OCI-LY7 (cell line): ENCODE measurements at regions of chr12 and their contacts with region 1.

Region 1: GRCh38 chr12:113048716-113049127 is 7.8 kb upstream of the DTX1 start:
- DNase-seq: peak; percentile 91
- H3K4me3 ChIP-seq: no peak overlapping the region
- H3K27ac ChIP-seq: peak overlapping the region; percentile 97
- H3K4me1 ChIP-seq: peaks cover 73% of the 10 kb centered on the region
- CTCF ChIP-seq: peak; percentile 96

Region 2: DNA sequence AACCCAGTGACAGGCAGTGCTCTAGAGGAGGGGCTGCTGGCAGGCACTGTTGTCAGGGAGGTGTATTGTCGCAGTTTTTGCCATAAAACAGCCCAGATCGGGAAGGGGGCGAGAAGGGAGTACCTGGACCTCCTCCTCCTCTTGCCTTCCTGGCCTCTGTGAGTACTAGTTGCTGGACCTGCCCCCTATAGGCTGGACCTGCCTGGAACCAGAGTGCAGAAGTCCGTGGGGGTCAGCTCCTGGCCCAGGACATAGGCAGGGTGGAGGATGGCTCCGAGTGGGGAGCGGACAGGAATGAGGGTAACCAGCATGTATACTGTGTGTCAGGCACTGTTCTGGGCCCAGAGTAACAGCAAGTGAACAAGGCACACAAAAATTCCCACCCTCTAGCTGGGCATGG is 513.7 kb before region 1 on chr12:
- CTCF ChIA-PET with region 1: no interaction called
- POLR2A ChIA-PET with region 1: no interaction called
- intact Hi-C with region 1: no loop called
- DNase-seq: no peak
- H3K4me3 ChIP-seq: no peak overlapping the region
- H3K27ac ChIP-seq: no peak overlapping the region
- H3K4me1 ChIP-seq: no peaks in the 10 kb centered on the region
- CTCF ChIP-seq: no peak

Region 3: DNA sequence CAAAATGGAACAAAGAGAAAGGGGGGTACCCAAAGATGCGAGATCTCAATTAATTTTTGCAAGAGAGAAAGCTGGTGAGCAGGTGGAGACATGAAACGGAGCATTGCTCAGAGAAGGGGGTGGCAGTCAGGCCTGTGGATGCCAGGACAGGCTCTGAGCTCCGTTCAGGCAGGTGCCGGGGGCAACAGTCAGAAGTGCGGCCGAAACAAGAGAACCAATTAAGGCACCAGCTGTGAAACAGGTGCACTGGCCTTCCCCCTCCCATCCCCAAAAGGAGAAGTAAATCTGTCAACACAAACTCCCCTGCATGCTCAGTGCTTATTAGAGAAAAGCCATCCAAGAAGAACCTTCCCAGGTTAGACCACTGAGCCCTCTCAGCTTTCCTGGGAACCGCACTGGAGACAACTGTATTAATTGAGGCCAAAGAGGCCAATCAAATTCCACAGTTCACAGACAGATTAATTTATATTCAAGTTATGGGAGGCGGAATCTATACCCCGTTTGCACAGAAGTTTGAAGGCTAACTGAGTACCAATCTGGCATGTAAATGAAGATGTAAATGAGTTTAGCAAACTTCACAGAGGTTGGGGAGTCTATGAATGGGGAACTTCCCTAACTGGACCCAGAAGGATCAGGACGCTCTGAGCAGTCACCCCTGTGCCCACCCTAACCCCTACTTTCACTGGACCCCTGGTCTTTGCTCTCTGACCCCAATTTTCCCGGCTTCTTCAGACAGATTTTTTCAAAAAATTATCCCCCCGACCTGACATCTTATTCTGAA is 49.5 kb before region 1 on chr12:
- CTCF ChIA-PET with region 1: no interaction called
- POLR2A ChIA-PET with region 1: interaction called, 4 read pairs
- intact Hi-C with region 1: loop called (anchors 1 kb)
- DNase-seq: peak; percentile 98
- H3K4me3 ChIP-seq: peak overlapping the region; percentile 41
- H3K27ac ChIP-seq: peak overlapping the region; percentile 99
- H3K4me1 ChIP-seq: peaks cover 45% of the 10 kb centered on the region
- CTCF ChIP-seq: no peak

Region 4: DNA sequence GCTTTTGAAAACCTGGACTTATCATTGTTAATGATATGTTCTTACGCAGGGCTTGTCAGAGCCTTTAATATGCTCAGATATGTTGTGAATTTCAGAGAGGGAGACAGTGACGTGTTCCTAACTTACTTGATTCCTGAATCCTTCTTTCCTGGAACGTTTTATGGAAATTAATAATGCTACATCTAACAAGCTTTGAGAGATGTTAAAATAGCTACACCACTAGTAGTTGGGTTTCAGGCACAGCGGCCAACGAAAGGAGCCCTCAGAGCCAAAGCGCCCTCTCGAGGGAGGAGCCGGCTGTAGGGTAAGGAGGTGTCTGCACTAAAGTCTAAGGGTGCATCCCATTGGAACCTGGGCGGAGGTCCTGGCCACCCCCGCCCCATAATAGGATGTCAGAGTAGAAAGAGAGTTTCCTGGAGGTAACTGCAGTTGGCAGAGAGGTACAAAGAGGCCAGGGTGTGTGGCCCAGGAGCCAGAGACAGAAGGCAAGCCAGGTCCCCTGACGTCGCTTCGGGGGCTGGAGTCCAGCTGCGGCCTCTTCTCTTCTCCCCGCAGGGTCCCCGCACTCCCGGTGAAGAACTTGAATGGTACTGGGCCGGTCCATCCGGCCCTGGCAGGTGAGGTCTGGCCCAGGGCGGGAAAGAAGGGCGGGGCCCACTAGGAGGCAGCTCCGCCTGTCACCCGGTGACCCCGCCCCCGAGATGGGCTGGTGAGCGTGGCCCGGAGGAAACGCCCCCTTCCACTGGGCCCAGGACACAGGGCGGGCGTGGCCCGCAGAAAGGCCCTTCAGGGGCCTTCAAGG is 44.1 kb after region 1 on chr12:
- CTCF ChIA-PET with region 1: interaction called, 8 read pairs
- POLR2A ChIA-PET with region 1: interaction called, 9 read pairs
- intact Hi-C with region 1: loop called (anchors 1 kb)
- DNase-seq: peak; percentile 68
- H3K4me3 ChIP-seq: no peak overlapping the region
- H3K27ac ChIP-seq: peak overlapping the region; percentile 97
- H3K4me1 ChIP-seq: peaks cover 78% of the 10 kb centered on the region
- CTCF ChIP-seq: peak; percentile 72

Region 5: GRCh38 chr12:113135178-113136127 is 86.7 kb after region 1 on chr12 and contains the start of gene RASAL1:
- CTCF ChIA-PET with region 1: interaction called, 4 read pairs
- POLR2A ChIA-PET with region 1: interaction called, 4 read pairs
- intact Hi-C with region 1: loop called (anchors 1 kb)
- DNase-seq: peak; percentile 93
- H3K4me3 ChIP-seq: peak within 1 kb of the TSS; percentile 90
- H3K27ac ChIP-seq: peak within 1 kb of the TSS; percentile 68
- H3K4me1 ChIP-seq: peaks cover 68% of the 10 kb centered on the region
- CTCF ChIP-seq: peak; percentile 78
- total RNA-seq, gene RASAL1: 69.1 and 89.1 TPM in 2 replicates

Region 6: DNA sequence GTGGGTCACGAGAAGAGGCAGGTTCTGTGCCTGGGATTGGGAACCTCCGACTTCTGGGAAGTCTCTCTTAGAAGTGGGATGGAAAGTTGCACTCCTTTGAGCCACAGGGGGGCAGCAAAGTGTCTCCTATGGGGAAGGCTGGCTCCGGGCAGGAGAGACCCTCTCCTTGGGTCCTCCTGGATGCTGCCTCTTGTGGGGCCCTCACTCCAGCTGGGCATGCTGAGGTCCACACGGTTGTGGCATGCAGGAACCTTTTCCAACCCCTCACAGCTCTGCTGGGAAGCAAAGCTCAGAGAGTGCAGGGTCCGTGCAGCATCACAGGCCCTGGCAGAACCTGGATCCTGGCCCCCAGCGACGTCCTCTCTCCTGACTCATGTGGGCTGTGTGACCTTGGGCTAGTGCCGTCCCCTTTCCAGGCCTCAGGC is 390.9 kb after region 1 on chr12:
- CTCF ChIA-PET with region 1: no interaction called
- POLR2A ChIA-PET with region 1: no interaction called
- intact Hi-C with region 1: no loop called
- DNase-seq: peak; percentile 59
- H3K4me3 ChIP-seq: no peak overlapping the region
- H3K27ac ChIP-seq: no peak overlapping the region
- H3K4me1 ChIP-seq: no peaks in the 10 kb centered on the region
- CTCF ChIP-seq: peak; percentile 91

Region 7: DNA sequence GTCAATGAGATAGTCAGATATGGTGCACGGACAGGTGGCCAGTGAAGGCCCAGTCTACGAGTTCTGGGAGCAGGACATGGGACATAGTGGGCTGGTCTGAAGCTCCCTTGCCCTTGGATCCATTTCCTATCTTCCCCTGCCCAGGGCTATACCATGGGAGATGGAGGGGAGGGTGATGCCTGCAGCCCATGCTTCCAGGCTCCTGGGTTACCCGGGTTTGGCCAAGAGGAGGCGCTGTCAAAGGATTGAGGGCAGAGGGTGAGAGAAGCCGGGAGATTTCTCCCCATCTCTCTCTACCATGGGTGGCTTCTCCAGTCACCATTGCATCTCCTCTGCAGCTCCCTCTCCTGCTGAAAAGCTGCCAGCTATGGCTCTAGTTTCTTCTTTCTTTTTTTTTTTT is 475.8 kb after region 1 on chr12:
- CTCF ChIA-PET with region 1: no interaction called
- POLR2A ChIA-PET with region 1: no interaction called
- intact Hi-C with region 1: no loop called
- DNase-seq: no peak
- H3K4me3 ChIP-seq: no peak overlapping the region
- H3K27ac ChIP-seq: no peak overlapping the region
- H3K4me1 ChIP-seq: no peaks in the 10 kb centered on the region
- CTCF ChIP-seq: no peak